ENCODE measurements at regions of chr20 and their contacts with region 1.

Region 1: GRCh38 chr20:45771182-45771759 is 20.4 kb downstream of the WFDC3 start:
- DNase-seq: peak; percentile 92 to 96
- H3K4me3 ChIP-seq: no peak overlapping the region
- H3K4me3 Mint-ChIP-seq: no peak overlapping the region
- H3K27ac Mint-ChIP-seq: peak overlapping the region; percentile 0
- H3K4me1 ChIP-seq: peaks cover 11% of the 10 kb centered on the region
- H3K4me1 Mint-ChIP-seq: peaks cover 10% of the 10 kb centered on the region
- H3K27me3 ChIP-seq: 0 out of 2 replicates have a peak, but pooled peaks cover 2% of the 10 kb centered on the region
- H3K27me3 Mint-ChIP-seq: peaks cover 4% of the 10 kb centered on the region
- CTCF ChIP-seq: peak; percentile 99 to 100

Region 2: GRCh38 chr20:45322952-45323383 is 448.3 kb before region 1 on chr20:
- CTCF ChIA-PET with region 1: interaction called, 76 read pairs
- POLR2A ChIA-PET with region 1: interaction called, 7 read pairs
- intact Hi-C with region 1: loop called (anchors 1 kb)
- DNase-seq: peak; percentile 84 to 86
- H3K4me3 ChIP-seq: no peak overlapping the region
- H3K4me3 Mint-ChIP-seq: no peak overlapping the region
- H3K27ac Mint-ChIP-seq: peak overlapping the region; percentile 3
- H3K4me1 ChIP-seq: peaks cover 8% of the 10 kb centered on the region; the same call in 1 of the 2 replicates
- H3K4me1 Mint-ChIP-seq: no peaks in the 10 kb centered on the region
- H3K27me3 ChIP-seq: no peaks in the 10 kb centered on the region
- H3K27me3 Mint-ChIP-seq: no peaks in the 10 kb centered on the region
- CTCF ChIP-seq: peak; percentile 55 to 79

Region 3: GRCh38 chr20:45392733-45393132 is 378.5 kb before region 1 on chr20:
- CTCF ChIA-PET with region 1: interaction called, 14 read pairs
- POLR2A ChIA-PET with region 1: no interaction called
- intact Hi-C with region 1: no loop called
- DNase-seq: peak in 1 of 2 experiments; percentile 46
- H3K4me3 ChIP-seq: no peak overlapping the region
- H3K4me3 Mint-ChIP-seq: no peak overlapping the region
- H3K27ac Mint-ChIP-seq: no peak overlapping the region
- H3K4me1 ChIP-seq: no peaks in the 10 kb centered on the region
- H3K4me1 Mint-ChIP-seq: no peaks in the 10 kb centered on the region
- H3K27me3 ChIP-seq: no peaks in the 10 kb centered on the region
- H3K27me3 Mint-ChIP-seq: peaks cover 2% of the 10 kb centered on the region
- CTCF ChIP-seq: no peak

Region 4: DNA sequence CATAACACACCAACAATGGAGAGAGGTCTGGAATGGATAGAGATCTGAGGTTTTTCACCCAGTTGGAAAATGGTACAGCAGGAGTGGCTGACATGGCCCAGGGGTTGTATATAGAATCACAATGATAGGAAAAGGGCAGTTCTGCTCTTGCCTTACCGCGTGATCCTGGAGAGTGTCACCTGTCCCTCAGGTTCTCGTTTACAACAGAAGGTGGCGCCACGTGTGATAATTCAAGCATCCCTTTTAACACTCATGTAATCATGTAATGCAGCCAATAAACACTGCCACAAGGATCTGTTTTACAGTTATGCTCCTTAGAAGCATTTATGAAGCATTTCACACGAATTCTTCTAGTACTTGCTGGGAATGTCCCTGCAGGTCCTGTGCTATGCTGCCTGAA is 314.6 kb before region 1 on chr20:
- CTCF ChIA-PET with region 1: interaction called, 14 read pairs
- POLR2A ChIA-PET with region 1: no interaction called
- intact Hi-C with region 1: loop called (anchors 1 kb)
- DNase-seq: peak; percentile 68 to 73
- H3K4me3 ChIP-seq: no peak overlapping the region
- H3K4me3 Mint-ChIP-seq: no peak overlapping the region
- H3K27ac Mint-ChIP-seq: no peak overlapping the region
- H3K4me1 ChIP-seq: no peaks in the 10 kb centered on the region
- H3K4me1 Mint-ChIP-seq: no peaks in the 10 kb centered on the region
- H3K27me3 ChIP-seq: no peaks in the 10 kb centered on the region
- H3K27me3 Mint-ChIP-seq: no peaks in the 10 kb centered on the region
- CTCF ChIP-seq: peak in 1 of 2 experiments; percentile 60

Region 5: DNA sequence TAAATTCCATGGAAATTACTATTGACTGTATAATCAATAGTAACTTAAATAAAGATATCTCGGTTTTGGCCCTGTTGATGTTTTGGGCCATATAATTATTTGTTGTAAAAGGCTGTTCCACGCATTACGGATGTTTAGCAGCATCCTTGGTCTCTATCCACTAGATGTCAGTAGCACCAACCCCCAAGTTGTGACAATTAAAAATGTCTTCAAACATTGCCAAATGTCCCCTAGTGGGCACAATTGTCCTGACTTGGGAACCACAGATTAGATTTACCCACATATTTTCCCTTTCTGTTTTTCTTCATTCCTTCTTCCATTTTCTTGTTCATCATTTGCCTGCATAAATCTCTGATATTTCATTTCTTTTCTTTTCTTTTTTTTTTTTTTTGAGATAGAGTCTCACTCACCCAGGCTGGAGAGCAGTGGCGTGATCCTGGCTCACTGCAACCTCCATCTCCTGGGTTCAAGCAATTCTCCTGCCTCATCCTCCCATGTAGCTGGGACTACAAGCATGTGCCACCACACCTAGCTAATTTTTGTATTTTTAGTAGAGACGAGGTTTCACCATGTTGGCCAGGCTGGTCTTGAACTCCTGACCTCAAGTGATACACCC is 178.6 kb before region 1 on chr20:
- CTCF ChIA-PET with region 1: interaction called, 38 read pairs
- POLR2A ChIA-PET with region 1: no interaction called
- intact Hi-C with region 1: loop called (anchors 1 kb)
- DNase-seq: peak; percentile 66 to 84
- H3K4me3 ChIP-seq: no peak overlapping the region
- H3K4me3 Mint-ChIP-seq: no peak overlapping the region
- H3K27ac Mint-ChIP-seq: no peak overlapping the region
- H3K4me1 ChIP-seq: no peaks in the 10 kb centered on the region
- H3K4me1 Mint-ChIP-seq: peaks cover 6% of the 10 kb centered on the region
- H3K27me3 ChIP-seq: 0 out of 2 replicates have a peak, but pooled peaks cover 3% of the 10 kb centered on the region
- H3K27me3 Mint-ChIP-seq: peaks cover 7% of the 10 kb centered on the region
- CTCF ChIP-seq: peak; percentile 98 to 99

Region 6: DNA sequence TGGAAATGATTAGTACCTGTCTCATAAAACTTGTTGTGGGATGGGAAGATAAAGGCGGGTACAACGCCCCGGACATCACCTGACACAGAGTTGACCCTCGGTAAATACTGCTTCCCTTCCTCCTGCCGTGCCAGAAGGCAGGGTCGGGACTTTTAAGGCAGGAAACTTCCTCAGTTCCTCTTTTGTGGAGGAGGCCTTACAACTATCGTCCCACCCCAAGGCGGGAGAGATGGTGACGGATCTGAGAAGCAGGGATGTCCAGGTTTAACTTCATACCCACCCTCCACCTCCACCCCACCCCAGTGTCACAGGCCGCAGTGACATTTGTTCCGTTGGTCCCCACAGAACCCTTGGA is 21.0 kb after region 1 on chr20:
- CTCF ChIA-PET with region 1: interaction called, 15 read pairs
- POLR2A ChIA-PET with region 1: no interaction called
- intact Hi-C with region 1: no loop called
- DNase-seq: no peak
- H3K4me3 ChIP-seq: peak overlapping the region; percentile 81
- H3K4me3 Mint-ChIP-seq: peak overlapping the region; percentile 76
- H3K27ac Mint-ChIP-seq: peak overlapping the region; percentile 87
- H3K4me1 ChIP-seq: peaks cover 5% of the 10 kb centered on the region
- H3K4me1 Mint-ChIP-seq: peaks cover 12% of the 10 kb centered on the region
- H3K27me3 ChIP-seq: no peaks in the 10 kb centered on the region
- H3K27me3 Mint-ChIP-seq: no peaks in the 10 kb centered on the region
- CTCF ChIP-seq: no peak

Measured in Caco-2 (cell line).